Activated CD4-positive, alpha-beta T cell treated with anti-CD3 and anti-CD28 coated beads, Interleukin-2, amount 10 ng/mL, durations not matched to agents 7 days and 5 days (primary cell): ENCODE measurements at regions of chr5 and their contacts with region 1.

Region 1: DNA sequence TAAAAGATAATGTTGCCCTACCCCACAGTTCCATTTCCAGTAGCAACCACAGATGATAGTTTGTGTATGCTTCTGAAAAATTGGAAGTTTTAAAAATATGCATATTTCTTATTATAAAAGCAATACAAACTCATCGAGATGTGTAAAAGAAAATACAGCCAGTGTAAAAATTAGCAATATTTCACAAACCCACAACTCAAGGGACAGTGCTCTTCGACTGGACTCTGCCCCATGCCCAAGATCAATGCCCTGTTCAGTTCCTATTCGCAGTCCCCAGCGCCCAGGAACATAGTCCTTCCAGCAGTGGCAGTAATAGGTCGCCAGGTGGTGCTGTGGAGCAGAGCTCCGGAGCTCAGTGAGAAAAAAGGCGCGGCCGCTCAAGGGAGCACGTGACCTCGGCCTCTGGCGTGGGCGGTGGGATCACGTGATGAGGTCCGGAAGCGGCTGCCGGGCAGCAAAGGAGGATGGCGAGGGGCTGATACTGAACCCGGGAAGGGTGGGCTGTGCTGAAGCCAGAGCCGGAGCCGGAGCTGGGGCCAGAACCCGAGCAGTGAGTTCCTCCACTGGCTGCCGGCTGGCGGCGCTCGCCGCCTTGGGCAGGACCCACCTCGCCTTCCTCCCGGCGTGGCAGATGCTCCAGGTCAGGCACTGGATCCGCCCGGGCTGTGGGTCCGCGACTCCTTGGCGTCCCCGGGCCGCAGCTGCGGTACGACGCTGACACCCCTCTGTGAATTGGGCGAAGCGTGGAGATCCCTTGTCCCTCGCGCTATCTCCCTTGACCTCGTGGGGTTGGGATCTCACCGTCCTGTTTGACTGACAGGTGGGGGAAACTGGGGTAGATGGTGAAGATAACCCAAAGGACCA is at the start of gene SLC36A1:
- DNase-seq: peak; percentile 93
- H3K4me3 Mint-ChIP-seq: peak within 1 kb of the TSS; percentile 87
- H3K27ac Mint-ChIP-seq: peak within 1 kb of the TSS; percentile 92
- H3K4me1 Mint-ChIP-seq: peaks cover 17% of the 10 kb centered on the region
- H3K27me3 Mint-ChIP-seq: peaks cover 31% of the 10 kb centered on the region
- total RNA-seq, gene SLC36A1: 5.8 TPM

Region 2: GRCh38 chr5:151459680-151460324 is 12.4 kb after region 1 on chr5:
- CTCF ChIA-PET with region 1: interaction called, 17 read pairs
- POLR2A ChIA-PET with region 1: no interaction called
- DNase-seq: no peak
- H3K4me3 Mint-ChIP-seq: no peak overlapping the region
- H3K27ac Mint-ChIP-seq: no peak overlapping the region
- H3K4me1 Mint-ChIP-seq: no peaks in the 10 kb centered on the region
- H3K27me3 Mint-ChIP-seq: no peaks in the 10 kb centered on the region

Region 3: DNA sequence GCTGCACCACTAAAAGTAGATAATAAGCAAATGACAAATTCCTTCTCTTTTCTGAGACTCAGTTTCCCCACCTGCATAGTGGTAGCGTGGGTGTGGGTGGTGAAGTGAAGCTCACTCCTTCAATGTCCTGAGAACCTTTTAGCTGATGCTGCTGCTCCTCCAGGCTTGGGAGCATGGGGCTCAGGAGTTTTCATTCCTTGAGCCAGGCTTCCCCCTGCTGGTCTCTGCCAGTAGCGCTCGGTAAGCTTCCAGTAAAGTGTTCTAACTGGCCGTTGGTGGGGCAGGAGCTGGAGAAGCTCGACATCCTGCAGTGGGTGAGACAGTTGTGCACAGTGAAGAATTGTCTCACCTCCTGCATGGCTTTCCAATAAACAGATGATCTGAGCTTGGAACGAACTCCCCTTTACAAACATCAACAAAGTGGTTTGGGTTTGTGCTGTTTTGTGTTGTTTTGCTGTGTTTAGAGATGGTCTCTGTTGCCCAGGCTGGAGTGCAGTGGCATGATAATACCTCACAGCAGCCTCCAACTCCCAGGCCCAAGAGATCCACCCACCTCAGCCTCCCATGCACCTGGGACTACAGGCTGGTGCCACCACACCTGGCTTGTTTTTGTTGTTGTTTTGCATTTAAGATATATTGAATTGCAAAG is 204.7 kb after region 1 on chr5:
- CTCF ChIA-PET with region 1: interaction called, 23 read pairs
- POLR2A ChIA-PET with region 1: no interaction called
- DNase-seq: peak; percentile 72
- H3K4me3 Mint-ChIP-seq: no peak overlapping the region
- H3K27ac Mint-ChIP-seq: no peak overlapping the region
- H3K4me1 Mint-ChIP-seq: no peaks in the 10 kb centered on the region
- H3K27me3 Mint-ChIP-seq: peaks cover 8% of the 10 kb centered on the region